ENCODE measurements at regions of chr2 and their contacts with region 1.

Region 1: DNA sequence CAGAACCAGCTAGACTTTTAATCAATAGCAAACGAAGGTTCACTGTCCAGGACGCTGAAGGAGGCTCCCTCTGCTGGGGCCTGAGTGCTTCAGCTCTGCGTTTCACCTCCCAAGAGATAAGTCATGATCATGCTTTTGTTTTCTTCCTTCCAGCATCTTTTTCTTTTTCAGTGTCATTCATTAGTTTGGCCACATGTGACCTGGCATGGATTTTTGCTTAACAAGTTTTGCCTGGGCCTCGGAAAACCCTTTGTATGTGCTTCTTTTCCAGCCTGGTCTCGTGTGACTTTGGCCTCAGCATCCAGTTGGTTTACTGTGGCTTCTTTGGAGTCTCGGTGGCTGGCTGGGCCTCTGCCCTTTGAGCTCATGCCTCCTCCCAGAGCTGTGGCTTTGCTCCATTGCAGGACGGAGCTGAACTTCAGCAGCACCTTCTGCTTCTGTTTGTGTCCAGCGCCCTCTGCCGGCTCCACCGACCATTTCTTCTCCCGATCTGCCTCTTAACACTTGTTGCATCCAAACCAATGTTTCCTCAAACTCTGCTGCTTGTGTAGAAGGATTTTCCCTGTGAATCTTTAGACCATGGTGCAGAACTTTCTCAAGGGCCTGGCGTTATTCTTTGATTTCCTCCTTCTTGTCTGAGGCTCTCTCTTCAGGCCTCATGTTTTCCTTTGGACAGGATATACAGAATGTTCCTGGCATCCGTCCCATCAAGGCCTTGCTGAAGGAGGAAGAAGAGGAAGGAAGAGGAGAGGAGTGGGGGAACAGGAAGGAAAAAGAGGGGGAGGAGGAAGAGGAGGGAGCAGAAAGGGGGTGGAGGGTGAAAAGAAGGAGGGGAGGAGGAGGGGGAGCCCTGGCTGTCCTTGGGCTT is 23.6 kb upstream of the HES6 start:
- DNase-seq: peak; percentile 64 to 70 (median 68)
- H3K4me3 ChIP-seq: no peak overlapping the region
- H3K4me3 Mint-ChIP-seq: peak overlapping the region in 2 of 8 donors; percentile 30 to 43
- H3K27ac ChIP-seq: no peak overlapping the region
- H3K27ac Mint-ChIP-seq: peak overlapping the region in 2 of 7 donors; percentile 25 to 52
- H3K4me1 ChIP-seq: no peaks in the 10 kb centered on the region
- H3K4me1 Mint-ChIP-seq: peaks cover 7 to 18% (median 9%) of the 10 kb centered on the region in 4 donors
- H3K27me3 ChIP-seq: no peaks in the 10 kb centered on the region
- H3K27me3 Mint-ChIP-seq: no peaks in the 10 kb centered on the region

Region 2: GRCh38 chr2:237512774-237513466 is 750.5 kb before region 1 on chr2:
- CTCF ChIA-PET with region 1: interaction called, 19 read pairs
- POLR2A ChIA-PET with region 1: no interaction called
- intact Hi-C with region 1: no loop called
- DNase-seq: peak; percentile 64 to 74 (median 70)
- H3K4me3 ChIP-seq: no peak overlapping the region
- H3K4me3 Mint-ChIP-seq: no peak overlapping the region
- H3K27ac ChIP-seq: no peak overlapping the region
- H3K27ac Mint-ChIP-seq: no peak overlapping the region
- H3K4me1 ChIP-seq: no peaks in the 10 kb centered on the region
- H3K4me1 Mint-ChIP-seq: no peaks in the 10 kb centered on the region
- H3K27me3 ChIP-seq: no peaks in the 10 kb centered on the region
- H3K27me3 Mint-ChIP-seq: peaks cover 0 to 3% of the 10 kb centered on the region in 2 donors

Region 3: GRCh38 chr2:237858294-237859081 is 404.9 kb before region 1 on chr2:
- CTCF ChIA-PET with region 1: interaction called, 21 read pairs
- POLR2A ChIA-PET with region 1: interaction called, 3 read pairs
- intact Hi-C with region 1: no loop called
- DNase-seq: peak in 4 of 5 donors; percentile 35 to 43 (median 40)
- H3K4me3 ChIP-seq: no peak overlapping the region
- H3K4me3 Mint-ChIP-seq: peak overlapping the region; percentile 62 to 87 (median 70)
- H3K27ac ChIP-seq: no peak overlapping the region
- H3K27ac Mint-ChIP-seq: peak overlapping the region in 1 of 7 donors; percentile 42
- H3K4me1 ChIP-seq: peaks cover 14% of the 10 kb centered on the region
- H3K4me1 Mint-ChIP-seq: peaks cover 5 to 15% (median 6%) of the 10 kb centered on the region in 4 donors
- H3K27me3 ChIP-seq: peaks cover 7% of the 10 kb centered on the region
- H3K27me3 Mint-ChIP-seq: peaks cover 18 to 21% of the 10 kb centered on the region in 2 donors

Region 4: GRCh38 chr2:237923481-237924163 is 339.8 kb before region 1 on chr2:
- CTCF ChIA-PET with region 1: interaction called, 13 read pairs
- POLR2A ChIA-PET with region 1: no interaction called
- intact Hi-C with region 1: loop called (anchors 1 kb)
- DNase-seq: peak; percentile 63 to 77 (median 75)
- H3K4me3 ChIP-seq: peak overlapping the region in 1 of 2 donors; percentile 35
- H3K4me3 Mint-ChIP-seq: peak overlapping the region; percentile 57 to 83 (median 66)
- H3K27ac ChIP-seq: no peak overlapping the region
- H3K27ac Mint-ChIP-seq: peak overlapping the region in 4 of 7 donors; percentile 7 to 65 (median 58)
- H3K4me1 ChIP-seq: peaks cover 16% of the 10 kb centered on the region
- H3K4me1 Mint-ChIP-seq: peaks cover 17 to 30% (median 22%) of the 10 kb centered on the region in 4 donors
- H3K27me3 ChIP-seq: no peaks in the 10 kb centered on the region
- H3K27me3 Mint-ChIP-seq: no peaks in the 10 kb centered on the region

Region 5: GRCh38 chr2:238160206-238161109 is 103.0 kb before region 1 on chr2:
- CTCF ChIA-PET with region 1: no interaction called
- POLR2A ChIA-PET with region 1: no interaction called
- intact Hi-C with region 1: loop called (anchors 1 kb)
- DNase-seq: no peak
- H3K4me3 ChIP-seq: no peak overlapping the region
- H3K4me3 Mint-ChIP-seq: peak overlapping the region in 1 of 8 donors; percentile 76
- H3K27ac ChIP-seq: no peak overlapping the region
- H3K27ac Mint-ChIP-seq: no peak overlapping the region
- H3K4me1 ChIP-seq: peaks cover 7% of the 10 kb centered on the region
- H3K4me1 Mint-ChIP-seq: peaks cover 4 to 18% (median 12%) of the 10 kb centered on the region in 4 donors
- H3K27me3 ChIP-seq: peaks cover 13% of the 10 kb centered on the region
- H3K27me3 Mint-ChIP-seq: peaks cover 16 to 17% of the 10 kb centered on the region in 2 donors

Region 6: GRCh38 chr2:238274152-238274865 is 10.9 kb after region 1 on chr2:
- CTCF ChIA-PET with region 1: interaction called, 11 read pairs
- POLR2A ChIA-PET with region 1: no interaction called
- intact Hi-C with region 1: no loop called
- DNase-seq: no peak
- H3K4me3 ChIP-seq: no peak overlapping the region
- H3K4me3 Mint-ChIP-seq: no peak overlapping the region
- H3K27ac ChIP-seq: no peak overlapping the region
- H3K27ac Mint-ChIP-seq: no peak overlapping the region
- H3K4me1 ChIP-seq: no peaks in the 10 kb centered on the region
- H3K4me1 Mint-ChIP-seq: peaks cover 0 to 7% (median 3%) of the 10 kb centered on the region in 4 donors
- H3K27me3 ChIP-seq: no peaks in the 10 kb centered on the region
- H3K27me3 Mint-ChIP-seq: no peaks in the 10 kb centered on the region

Region 7: DNA sequence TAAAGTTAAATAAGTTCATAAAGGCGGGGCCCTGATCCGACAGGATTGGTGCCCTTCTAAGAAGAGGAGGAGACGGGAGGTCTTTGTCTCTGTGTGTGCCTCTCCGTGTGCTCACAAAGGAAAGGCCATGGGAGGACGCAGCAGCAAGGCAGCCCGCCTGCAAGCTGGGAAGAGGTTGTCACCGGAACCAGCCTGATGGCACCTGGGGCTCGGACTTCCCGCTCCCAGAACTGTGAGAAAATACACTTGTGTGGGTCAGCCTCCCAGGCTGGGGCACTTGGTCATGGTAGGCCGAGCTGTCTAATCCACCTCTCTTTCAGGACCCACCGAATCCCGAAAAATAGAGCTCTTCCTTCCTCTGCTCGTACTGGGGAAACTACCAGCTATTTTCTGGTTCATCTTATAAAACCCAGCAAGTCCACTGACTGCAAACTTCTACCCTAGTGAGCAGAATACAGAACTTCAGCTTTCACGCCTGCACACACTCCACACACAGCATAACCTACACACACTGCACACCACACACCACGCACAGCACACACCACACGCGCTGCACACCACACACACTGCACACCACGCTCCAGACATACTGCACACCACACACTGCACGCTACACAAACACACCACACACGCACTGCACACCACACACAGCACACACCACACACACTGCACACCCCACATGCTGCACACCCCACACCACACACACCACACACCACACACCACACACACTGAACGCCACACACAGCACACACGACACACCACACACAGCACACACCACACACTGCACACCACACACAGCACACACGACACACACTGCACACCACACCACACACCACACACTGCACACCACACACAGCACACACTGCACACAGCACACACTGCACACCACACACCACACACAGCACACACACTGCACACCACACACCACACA is 221.3 kb after region 1 on chr2:
- CTCF ChIA-PET with region 1: no interaction called
- POLR2A ChIA-PET with region 1: no interaction called
- intact Hi-C with region 1: no loop called
- DNase-seq: no peak
- H3K4me3 ChIP-seq: no peak overlapping the region
- H3K4me3 Mint-ChIP-seq: no peak overlapping the region
- H3K27ac ChIP-seq: no peak overlapping the region
- H3K27ac Mint-ChIP-seq: no peak overlapping the region
- H3K4me1 ChIP-seq: no peaks in the 10 kb centered on the region
- H3K4me1 Mint-ChIP-seq: no peaks in the 10 kb centered on the region
- H3K27me3 ChIP-seq: no peaks in the 10 kb centered on the region
- H3K27me3 Mint-ChIP-seq: no peaks in the 10 kb centered on the region

Measured in CD4-positive, alpha-beta memory T cell (primary cell).